Posterior vena cava (tissue), 2 donors: ENCODE measurements at regions of chr1 and their contacts with region 1.

Region 1: DNA sequence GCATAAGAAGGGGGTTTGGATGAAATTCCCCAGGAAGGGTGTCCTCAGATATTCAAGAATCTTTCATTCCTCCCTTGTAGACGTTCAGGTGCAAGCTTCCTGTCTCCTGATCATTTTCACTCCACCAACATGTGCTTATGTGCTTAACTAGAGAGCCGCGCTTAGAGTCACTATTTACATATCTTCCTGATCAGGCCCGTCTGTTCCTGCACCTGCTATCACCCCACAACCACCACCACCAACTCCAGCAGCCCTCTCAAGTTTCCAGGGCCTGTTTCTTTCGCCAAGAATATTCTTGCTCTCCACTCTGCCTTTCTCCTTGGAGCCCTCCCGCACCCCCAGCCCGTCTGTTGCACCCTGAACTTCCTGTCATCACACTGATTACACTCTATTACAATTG is 113.4 kb downstream of the SPSB1 start:
- DNase-seq: no peak

Region 2: DNA sequence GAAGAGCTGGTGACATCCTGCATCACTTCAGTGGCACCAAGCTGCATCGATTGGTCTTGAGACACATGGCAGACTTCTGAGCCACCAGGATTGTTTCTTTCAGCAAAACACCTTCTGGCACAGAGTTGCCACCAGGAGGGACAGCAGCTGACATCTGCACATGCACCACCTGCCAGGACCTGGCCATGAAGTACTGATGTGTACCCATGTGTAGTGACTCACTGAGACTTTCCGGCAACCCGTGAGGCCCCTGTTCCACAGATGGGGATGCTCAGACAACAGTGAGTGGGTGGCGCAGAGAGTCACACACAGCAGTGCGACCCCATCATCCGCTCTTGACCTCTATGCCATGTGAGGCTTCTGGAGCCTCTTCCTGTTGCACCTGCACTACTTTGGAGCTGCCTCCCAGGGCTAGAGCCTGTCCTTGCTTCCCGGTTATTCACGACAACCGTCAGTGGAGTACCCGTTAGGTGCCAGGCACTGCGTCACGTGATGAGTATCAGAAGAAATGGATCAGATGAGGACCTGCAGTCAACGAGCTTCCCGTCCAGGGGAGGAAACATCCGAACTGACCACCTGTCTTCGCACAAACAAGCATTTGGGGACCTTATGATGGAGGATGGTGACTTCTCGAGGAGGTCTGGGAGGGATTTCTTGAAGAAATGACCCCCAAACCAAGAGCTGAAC is 1715.5 kb before region 1 on chr1:
- intact Hi-C with region 1: loop called in 1 of 2 experiments (anchors 5 kb)
- DNase-seq: no peak

Region 3: DNA sequence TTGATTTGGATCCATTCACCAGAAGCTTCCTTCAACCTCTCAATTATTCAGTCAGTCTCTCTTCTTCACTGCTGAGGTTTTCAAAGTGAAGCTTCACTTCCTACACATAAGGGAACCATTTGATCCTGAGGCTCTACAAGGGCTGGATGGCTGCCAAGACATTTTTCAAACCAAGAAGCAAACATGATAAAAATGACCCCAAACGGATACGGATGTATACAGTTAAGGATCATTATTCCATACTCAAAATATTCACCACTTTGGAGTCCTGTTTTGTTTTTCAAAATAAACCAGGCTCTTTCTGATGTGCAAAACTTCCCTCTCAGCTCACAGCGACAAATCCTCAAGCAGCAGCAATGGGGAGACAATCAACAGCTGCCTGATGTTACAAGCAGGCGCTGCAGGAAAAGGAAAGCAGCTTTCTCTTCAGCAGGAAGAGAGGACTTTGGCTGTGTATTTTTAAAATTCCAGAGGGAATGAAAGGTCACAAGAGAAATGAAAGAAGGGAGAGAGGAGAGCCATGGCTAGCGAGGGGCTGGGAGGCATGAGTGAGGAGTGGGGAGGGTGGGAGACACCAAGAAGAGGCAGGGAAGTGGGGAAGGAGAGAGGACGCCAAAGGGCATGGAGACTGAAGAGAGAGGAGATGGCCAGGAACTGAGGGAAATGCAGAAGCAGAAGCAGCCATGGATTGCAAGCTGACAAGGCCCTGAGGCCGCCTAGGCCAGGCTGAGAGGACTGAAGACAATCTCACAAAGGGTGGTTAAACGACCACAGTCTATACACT is 942.8 kb before region 1 on chr1:
- intact Hi-C with region 1: no loop called
- DNase-seq: no peak

Region 4: GRCh38 chr1:9275567-9276034 is 130.5 kb before region 1 on chr1:
- intact Hi-C with region 1: no loop called
- DNase-seq: no peak

Region 5: DNA sequence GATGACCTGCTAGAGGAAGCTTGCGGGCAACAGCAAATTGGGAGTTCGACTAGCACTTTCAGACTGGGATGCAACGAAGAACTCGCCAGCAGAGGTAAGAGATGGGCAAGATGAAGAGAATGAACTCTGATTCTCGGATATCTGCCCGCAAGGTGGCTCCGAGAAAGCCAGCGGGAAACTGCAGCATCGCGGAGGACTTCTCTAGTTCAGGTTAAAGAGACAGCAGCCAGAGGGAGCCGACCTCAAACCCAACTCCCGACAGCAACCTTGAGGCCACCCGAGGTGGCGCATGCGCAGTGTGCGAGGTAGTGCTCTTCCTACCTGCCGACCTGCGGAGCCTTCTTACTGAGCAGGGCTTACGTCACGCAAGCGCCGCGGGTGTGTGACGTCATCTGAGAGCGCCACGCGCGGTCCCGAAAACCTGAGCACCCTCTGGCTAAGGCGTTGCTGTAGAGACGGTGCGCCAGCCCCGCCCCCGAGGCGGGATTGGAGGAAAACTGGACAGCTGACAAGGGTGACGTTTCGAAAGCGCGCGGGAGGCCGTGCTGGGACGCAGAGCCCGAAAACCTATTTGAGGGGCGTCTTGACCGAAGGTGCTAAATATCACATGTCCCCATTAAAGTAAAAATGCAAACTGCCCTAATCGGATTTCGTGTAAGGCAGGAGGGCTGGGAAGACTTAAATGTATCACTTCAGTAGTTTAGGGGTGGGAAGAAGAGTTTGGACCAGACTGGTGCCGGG is 22.7 kb after region 1 on chr1:
- intact Hi-C with region 1: no loop called
- DNase-seq: peak; percentile 100

Region 6: DNA sequence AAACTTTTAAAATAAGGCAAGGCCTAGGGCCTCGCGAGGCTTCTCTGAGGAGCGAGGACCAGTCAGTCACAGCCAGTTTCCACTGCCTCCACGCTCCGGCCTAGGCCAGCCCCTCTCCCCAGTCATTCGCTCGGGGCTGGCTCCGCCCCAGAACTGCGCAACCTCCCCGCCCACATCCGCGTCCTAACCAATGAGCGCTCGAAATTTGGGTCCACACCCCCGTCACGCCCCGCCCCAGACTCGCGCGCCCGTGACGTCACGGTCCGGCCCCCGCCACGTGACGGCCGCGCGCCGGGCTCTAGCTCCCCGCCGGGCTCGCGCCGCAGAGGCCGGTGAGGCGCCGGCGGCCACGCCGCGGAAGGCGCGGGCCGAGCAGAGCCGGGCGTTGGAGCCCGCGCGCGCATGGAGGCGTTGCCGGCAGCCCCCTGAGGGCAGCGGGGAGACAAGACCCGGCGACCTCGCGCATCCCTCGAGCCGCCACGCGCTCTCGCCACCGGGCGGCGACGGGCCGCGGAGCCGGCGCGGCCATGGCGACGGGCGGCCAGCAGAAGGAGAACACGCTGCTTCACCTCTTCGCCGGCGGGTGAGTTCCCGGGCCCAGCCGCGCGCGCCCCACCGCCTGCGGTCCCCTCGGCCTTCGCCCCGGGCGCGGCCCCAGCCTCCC is 133.2 kb after region 1 on chr1 and contains the start of gene SLC25A33:
- intact Hi-C with region 1: no loop called
- DNase-seq: peak; percentile 99
- total RNA-seq, gene SLC25A33: 2.3 to 4.5 TPM